Dorsolateral prefrontal cortex (tissue), 120 donors: ENCODE measurements at regions of chr1 and their contacts with region 1.

Region 1: DNA sequence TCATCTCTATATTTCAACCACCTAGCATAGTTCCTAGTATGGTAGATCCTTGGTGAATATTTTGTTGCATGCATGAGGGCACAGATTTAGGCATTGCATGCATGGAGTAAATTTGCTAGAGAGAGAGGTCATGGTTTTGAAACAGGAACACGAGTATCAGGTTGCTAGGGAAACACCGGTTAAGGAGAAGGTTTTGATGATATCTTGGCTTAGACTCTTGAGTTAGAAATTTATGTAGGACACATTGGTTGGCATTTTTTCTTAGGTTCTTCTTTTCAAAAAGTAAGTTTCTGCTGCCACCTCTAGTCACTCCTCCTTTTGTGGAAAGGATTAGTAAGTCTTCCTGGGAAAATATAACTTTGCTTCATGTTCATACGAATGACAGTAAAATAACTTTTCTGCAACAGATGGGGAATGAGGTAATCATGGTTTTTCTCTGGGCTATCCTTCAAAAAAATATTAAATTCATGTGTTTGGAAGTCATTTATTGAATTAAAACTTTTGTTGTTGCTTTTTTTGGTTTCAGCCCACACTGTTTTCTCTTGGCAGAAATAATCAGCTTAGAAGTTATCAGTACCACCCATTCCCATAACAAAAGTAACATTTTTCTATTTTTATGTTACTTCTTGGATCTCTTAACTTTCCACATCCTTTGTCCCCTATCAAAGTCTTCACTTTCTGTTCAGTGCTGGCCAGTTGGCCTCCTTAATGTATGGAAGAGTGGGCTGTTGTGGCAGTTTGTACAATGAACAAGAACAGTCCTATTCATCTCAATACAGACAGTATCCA is 97.3 kb downstream of the PLA2G4A start:
- DNase-seq: no peak
- H3K4me3 ChIP-seq: no peak overlapping the region
- H3K27ac ChIP-seq: peak overlapping the region in 28 of 59 donors; percentile 1 to 78 (median 46)
- H3K27me3 ChIP-seq: no peaks in the 10 kb centered on the region
- CTCF ChIP-seq: peak in 4 of 56 donors; percentile 11 to 20 (median 12)

Region 2: DNA sequence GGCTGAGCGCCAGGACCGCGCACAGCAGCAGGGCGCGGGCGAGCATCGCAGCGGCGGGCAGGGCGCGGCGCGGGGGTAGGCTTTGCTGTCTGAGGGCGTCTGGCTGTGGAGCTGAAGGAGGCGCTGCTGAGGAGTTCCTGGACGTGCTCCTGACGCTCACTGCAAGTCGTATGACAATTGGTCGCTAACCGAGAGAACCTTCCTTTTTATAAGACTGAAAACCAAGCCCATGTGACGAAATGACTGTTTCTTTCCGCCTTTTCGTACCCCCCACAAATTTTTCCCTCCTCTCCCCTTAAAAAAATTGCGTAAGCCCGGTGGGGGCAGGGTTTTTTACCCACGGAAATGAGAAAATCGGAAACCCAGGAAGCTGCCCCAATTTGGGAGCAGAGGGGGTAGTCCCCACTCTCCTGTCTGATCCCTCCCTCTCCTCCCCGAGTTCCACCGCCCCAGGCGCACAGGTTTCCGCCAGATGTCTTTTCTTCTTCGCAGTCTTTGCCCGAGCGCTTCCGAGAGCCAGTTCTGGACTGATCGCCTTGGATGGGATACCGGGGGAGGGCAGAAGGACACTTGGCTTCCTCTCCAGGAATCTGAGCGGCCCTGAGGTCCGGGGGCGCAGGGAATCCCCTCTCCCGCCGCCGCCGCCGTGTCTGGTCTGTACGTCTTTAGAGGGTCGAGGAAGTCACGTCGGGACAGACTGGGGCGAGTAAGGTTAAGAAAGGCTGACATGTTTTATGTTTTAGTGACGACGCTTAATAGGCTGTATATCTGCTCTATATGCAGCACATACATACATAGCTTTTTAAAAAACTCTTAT is 245.6 kb before region 1 on chr1 and contains the start of gene PTGS2:
- intact Hi-C with region 1: loop called in 1 of 2 experiments (anchors 2 kb)
- DNase-seq: peak; percentile 9 to 80 (median 64)
- H3K4me3 ChIP-seq: peak within 1 kb of the TSS; percentile 33 to 80 (median 62)
- H3K27ac ChIP-seq: peak within 1 kb of the TSS in 58 of 59 donors; percentile 2 to 93 (median 78)
- H3K27me3 ChIP-seq: peaks cover 0 to 22% (median 0%) of the 10 kb centered on the region in 45 donors
- CTCF ChIP-seq: peak in 47 of 56 donors; percentile 15 to 60 (median 39)
- total RNA-seq, gene PTGS2: 2.3 to 27.2 (median 6.1) TPM

Region 3: GRCh38 chr1:186865253-186865652 is 60.8 kb before region 1 on chr1:
- intact Hi-C with region 1: no loop called
- DNase-seq: no peak
- H3K4me3 ChIP-seq: no peak overlapping the region
- H3K27ac ChIP-seq: no peak overlapping the region
- H3K27me3 ChIP-seq: no peaks in the 10 kb centered on the region
- CTCF ChIP-seq: no peak